PC-3 (cell line): ENCODE measurements at regions of chr5 and their contacts with region 1.

Region 1: GRCh38 chr5:75336625-75337339 is at the start of gene HMGCR:
- DNase-seq: peak; percentile 97
- ATAC-seq: peak; percentile 95
- H3K4me3 ChIP-seq: peak within 1 kb of the TSS; percentile 99
- H3K27ac ChIP-seq: peak within 1 kb of the TSS; percentile 86
- H3K4me1 ChIP-seq: peaks cover 33% of the 10 kb centered on the region
- H3K27me3 ChIP-seq: no peaks in the 10 kb centered on the region
- CTCF ChIP-seq: 0 out of 2 replicates have a peak, but pooled peaks have one; percentile 19
- total RNA-seq, gene HMGCR: 19.9 and 22.0 TPM in 2 replicates

Region 2: DNA sequence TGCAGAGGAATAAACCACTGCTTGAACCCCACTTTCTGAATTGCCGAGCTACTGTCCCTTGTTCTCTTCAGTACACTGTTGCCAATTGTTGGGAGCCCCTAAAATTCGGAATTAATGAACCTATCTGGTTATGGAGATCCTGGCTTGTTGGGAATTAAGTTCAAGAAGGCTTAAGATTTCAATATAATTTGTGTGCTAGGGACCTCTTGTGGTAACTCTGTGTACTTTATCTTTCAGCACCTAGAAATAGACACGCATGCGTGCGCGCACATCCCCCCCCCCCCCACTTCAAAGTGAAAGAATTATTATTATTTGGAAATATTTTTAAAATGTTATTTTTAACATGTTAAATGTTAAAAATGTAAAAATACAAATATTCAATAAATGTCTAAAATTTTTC is 417.3 kb before region 1 on chr5:
- CTCF ChIA-PET with region 1: no interaction called
- POLR2A ChIA-PET with region 1: interaction called, 20 read pairs
- intact Hi-C with region 1: no loop called
- DNase-seq: peak; percentile 63
- ATAC-seq: no peak; the same call in 1 of the 2 replicates
- H3K4me3 ChIP-seq: no peak overlapping the region
- H3K27ac ChIP-seq: no peak overlapping the region
- H3K4me1 ChIP-seq: peaks cover 8% of the 10 kb centered on the region; the same call in 1 of the 2 replicates
- H3K27me3 ChIP-seq: no peaks in the 10 kb centered on the region
- CTCF ChIP-seq: peak; percentile 50; the same call in 1 of the 2 replicates

Region 3: DNA sequence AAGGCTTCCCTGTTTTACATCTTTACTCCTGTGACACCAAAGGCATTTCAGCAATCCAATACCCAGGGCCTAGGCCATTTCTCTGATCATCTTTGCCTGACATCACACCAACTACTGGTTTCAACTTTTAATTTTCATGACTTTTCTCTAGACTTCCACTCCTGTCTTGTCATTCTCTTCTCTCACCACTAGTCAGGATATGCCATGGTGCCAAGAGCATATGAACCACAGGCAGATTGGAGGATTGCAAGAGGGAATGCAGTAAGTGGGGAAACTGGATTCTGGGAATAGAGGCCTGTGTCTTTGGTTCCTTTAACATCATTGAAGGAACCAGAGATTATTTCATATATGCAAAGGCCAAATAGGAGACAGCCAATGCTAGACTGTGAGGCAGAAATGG is 169.4 kb before region 1 on chr5:
- CTCF ChIA-PET with region 1: no interaction called
- POLR2A ChIA-PET with region 1: no interaction called
- intact Hi-C with region 1: no loop called
- DNase-seq: peak; percentile 19
- ATAC-seq: no peak; the same call in 1 of the 2 replicates
- H3K4me3 ChIP-seq: no peak overlapping the region
- H3K27ac ChIP-seq: no peak overlapping the region
- H3K4me1 ChIP-seq: no peaks in the 10 kb centered on the region
- H3K27me3 ChIP-seq: no peaks in the 10 kb centered on the region
- CTCF ChIP-seq: peak; percentile 41; the same call in 1 of the 2 replicates

Region 4: GRCh38 chr5:75236322-75237316 is 100.2 kb before region 1 on chr5 and contains the start of gene ANKRD31:
- CTCF ChIA-PET with region 1: interaction called, 11 read pairs
- POLR2A ChIA-PET with region 1: interaction called, 8 read pairs
- intact Hi-C with region 1: loop called (anchors 1 kb)
- DNase-seq: peak; percentile 74
- ATAC-seq: peak; percentile 98
- H3K4me3 ChIP-seq: peak within 1 kb of the TSS; percentile 88
- H3K27ac ChIP-seq: no peak within 1 kb of the TSS
- H3K4me1 ChIP-seq: peaks cover 19% of the 10 kb centered on the region
- H3K27me3 ChIP-seq: no peaks in the 10 kb centered on the region
- CTCF ChIP-seq: peak; percentile 64
- total RNA-seq, gene ANKRD31: 0.12 and 0.26 TPM in 2 replicates

Region 5: DNA sequence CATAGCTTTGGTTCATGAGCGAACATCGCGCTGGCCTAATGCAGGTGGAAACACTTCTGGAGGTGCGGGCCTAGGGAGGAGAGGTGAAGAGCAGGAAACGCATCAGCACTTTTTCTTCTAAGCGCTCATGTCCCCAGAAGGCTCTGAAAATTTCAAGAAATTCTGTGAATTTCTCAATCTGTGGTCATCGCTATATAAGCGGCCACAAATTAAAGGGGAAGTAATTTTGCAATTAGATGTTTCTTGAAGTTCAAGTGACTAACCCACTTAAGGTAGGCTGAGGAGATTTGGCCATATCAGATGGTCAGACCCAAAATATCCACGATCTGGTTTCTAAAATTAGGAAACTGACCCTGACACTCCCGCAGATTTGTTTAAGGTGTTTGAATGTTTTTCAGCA is 16.4 kb before region 1 on chr5:
- CTCF ChIA-PET with region 1: interaction called, 3 read pairs
- POLR2A ChIA-PET with region 1: interaction called, 4 read pairs
- intact Hi-C with region 1: loop called (anchors 1 kb)
- DNase-seq: no peak
- ATAC-seq: no peak
- H3K4me3 ChIP-seq: no peak overlapping the region
- H3K27ac ChIP-seq: peak overlapping the region; percentile 94
- H3K4me1 ChIP-seq: peaks cover 24% of the 10 kb centered on the region
- H3K27me3 ChIP-seq: no peaks in the 10 kb centered on the region
- CTCF ChIP-seq: no peak

Region 6: GRCh38 chr5:75511435-75512384 is 174.9 kb after region 1 on chr5 and contains the starts of genes CERT1 and POLK:
- CTCF ChIA-PET with region 1: no interaction called
- POLR2A ChIA-PET with region 1: no interaction called
- intact Hi-C with region 1: loop called (anchors 2 kb)
- DNase-seq: peak; percentile 95
- ATAC-seq: peak; percentile 96
- H3K4me3 ChIP-seq: peak within 1 kb of the TSS; percentile 83
- H3K27ac ChIP-seq: peak within 1 kb of the TSS; percentile 10; the same call in 1 of the 2 replicates
- H3K4me1 ChIP-seq: peaks cover 15% of the 10 kb centered on the region
- H3K27me3 ChIP-seq: no peaks in the 10 kb centered on the region
- CTCF ChIP-seq: no peak
- total RNA-seq, gene CERT1: 5.6 and 6.5 TPM in 2 replicates
- total RNA-seq, gene POLK: 6.5 and 9.0 TPM in 2 replicates